Mammary epithelial cell (primary cell): ENCODE measurements at regions of chr16 and their contacts with region 1.

Region 1: GRCh38 chr16:58421529-58421928 is 29.3 kb downstream of the GINS3 start:
- DNase-seq: peak; percentile 88
- H3K4me3 ChIP-seq: no peak overlapping the region
- H3K27ac ChIP-seq: no peak overlapping the region
- H3K4me1 ChIP-seq: peaks cover 12% of the 10 kb centered on the region
- H3K27me3 ChIP-seq: peaks cover 2% of the 10 kb centered on the region
- CTCF ChIP-seq: peak in 1 of 2 donors; percentile 38

Region 2: DNA sequence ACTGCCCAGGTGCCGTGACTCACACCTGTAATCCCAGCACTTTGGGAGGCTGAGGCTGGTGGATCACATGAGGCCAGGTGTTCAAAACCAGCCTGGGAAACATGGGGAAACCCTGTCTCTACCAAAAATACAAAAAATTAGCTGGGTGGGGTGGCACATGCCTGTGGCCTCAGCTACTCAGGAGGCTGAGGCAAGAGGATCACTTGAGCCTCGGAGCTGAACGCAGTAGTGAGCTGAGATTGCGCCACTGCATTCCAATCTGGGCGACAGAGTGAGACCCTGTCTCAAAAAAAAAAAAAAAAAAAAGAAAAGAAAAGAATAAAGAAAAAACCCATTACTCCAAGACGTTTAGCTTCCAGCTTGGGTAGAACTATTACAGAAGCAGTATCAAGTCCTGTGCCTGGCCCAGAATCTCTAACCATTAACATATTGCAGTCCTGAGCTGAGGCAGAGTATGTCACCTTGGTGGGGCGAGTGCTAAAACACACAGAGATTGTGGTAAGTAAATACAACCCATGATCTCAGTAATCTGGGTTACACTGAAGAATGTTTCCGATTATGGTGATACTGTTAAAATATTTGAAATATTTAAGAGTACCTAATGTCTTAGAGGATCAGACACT is 269.2 kb before region 1 on chr16:
- CTCF ChIA-PET with region 1: no interaction called
- dilution Hi-C with region 1: no loop called
- in situ Hi-C with region 1: no loop called
- intact Hi-C with region 1: no loop called
- DNase-seq: no peak
- H3K4me3 ChIP-seq: no peak overlapping the region
- H3K27ac ChIP-seq: no peak overlapping the region
- H3K4me1 ChIP-seq: no peaks in the 10 kb centered on the region
- H3K27me3 ChIP-seq: no peaks in the 10 kb centered on the region
- CTCF ChIP-seq: no peak

Region 3: DNA sequence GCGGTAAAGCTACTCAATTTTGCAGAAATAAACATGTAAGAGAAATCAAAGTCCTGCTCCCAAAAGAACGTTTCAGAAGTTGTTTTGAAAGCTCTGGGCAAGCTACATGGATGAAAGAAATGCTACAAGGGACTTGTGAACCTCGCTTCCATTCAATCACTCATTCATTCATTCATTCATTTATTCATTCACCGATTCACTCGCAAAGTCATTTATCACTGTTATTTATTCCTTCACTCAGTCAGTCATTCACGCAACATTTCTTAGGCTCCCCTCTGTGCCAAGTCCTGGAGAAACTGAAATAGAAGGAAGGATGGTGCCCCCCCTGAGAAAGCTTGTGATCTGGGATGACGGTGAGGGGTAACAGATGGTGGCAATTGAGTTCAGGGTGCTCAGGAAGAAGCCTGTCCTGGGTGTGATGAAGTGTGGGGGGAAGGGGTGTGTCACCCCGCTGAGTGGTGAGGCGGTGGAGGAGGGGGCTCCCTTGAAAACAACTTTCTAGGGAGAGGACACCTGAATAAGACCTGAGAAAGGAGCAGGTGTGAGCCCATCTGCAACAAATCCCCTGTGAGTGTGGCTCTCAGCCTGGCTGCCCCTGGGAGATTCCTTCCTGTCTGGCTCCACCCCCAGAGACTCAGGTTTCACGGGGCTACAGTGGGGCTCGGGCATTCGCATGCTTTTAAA is 90.4 kb before region 1 on chr16:
- CTCF ChIA-PET with region 1: no interaction called
- dilution Hi-C with region 1: loop called (anchors 5 kb)
- in situ Hi-C with region 1: no loop called
- intact Hi-C with region 1: no loop called
- DNase-seq: no peak
- H3K4me3 ChIP-seq: no peak overlapping the region
- H3K27ac ChIP-seq: no peak overlapping the region
- H3K4me1 ChIP-seq: peaks cover 4% of the 10 kb centered on the region
- H3K27me3 ChIP-seq: no peaks in the 10 kb centered on the region
- CTCF ChIP-seq: no peak

Region 4: DNA sequence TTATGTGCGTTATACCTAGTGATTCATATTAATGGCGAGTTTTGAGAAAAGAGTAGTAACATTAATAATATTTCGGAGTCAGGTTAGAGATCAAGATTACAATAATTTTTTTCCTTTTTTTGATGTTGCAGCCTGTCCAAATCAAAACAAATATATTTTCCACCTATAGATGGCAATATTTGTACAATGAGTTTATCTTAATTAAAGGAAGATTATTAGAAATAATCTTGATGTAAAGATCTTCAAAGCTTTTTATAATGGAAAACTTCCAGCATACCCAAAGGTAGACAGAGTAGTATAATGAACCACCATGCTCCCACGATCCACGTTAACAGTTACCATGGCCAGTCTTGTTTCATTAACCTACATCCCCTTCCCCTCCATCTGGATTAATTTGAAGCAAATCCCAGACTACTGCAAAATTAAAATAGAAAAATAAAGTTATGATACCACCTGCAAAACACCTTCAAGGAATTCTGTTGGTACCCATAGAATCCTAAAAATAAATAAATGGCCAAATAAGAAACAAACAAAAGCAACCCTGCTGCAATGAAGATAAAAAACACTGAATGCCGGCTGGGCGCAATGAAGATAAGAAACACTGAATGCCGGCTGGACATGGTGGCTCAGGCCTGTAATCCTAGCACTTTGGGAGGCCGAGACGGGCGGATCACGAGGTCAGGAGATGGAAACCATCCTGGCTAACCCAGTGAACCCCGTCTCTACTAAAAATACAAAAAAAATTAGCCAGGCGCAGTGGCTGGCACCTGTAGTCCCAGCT is 75.8 kb before region 1 on chr16:
- CTCF ChIA-PET with region 1: no interaction called
- dilution Hi-C with region 1: no loop called
- in situ Hi-C with region 1: no loop called
- intact Hi-C with region 1: loop called (anchors 5 kb)
- DNase-seq: no peak
- H3K4me3 ChIP-seq: no peak overlapping the region
- H3K27ac ChIP-seq: no peak overlapping the region
- H3K4me1 ChIP-seq: no peaks in the 10 kb centered on the region
- H3K27me3 ChIP-seq: no peaks in the 10 kb centered on the region
- CTCF ChIP-seq: peak; percentile 26 to 38

Region 5: DNA sequence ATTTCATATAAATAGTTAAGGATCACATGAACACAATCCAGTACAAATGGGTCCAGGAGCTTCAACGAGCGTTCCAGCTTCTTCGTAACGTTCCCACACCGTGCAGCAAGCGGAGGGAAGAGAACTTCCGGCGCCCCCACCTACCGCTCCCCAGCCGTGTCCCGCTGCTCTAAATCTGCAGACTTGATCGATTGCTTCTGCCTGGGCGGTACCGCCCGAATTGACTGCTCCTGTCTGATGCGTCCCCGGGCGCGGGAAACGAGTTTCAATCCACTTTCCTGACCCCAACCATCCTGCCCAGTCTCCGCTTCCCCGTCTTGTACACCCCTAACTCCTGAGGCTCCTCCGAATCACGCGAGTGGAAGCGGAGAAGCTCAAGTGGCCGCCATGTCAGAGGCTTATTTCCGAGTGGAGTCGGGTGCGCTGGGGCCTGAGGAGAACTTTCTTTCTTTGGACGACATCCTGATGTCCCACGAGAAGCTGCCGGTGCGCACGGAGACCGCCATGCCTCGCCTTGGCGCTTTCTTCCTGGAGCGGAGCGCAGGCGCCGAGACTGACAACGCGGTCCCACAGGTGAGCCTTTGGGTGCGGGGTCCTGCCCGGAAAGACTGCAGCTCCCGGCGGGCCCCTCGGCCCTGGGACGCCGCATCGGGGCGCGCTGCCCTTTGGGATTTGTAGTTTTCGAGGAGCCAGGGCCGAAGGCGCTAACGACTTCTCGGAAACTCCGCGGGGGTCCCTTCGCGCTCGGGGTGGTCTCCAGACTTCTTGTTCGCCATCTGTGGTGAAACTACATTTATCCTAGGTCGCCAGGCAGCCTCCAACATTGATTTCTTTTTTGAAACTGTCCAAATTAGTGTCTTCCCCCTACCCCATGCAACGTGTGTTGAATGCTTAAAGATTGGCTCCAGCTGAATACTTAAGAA is 29.1 kb before region 1 on chr16 and contains the start of gene GINS3:
- CTCF ChIA-PET with region 1: no interaction called
- dilution Hi-C with region 1: no loop called
- in situ Hi-C with region 1: no loop called
- intact Hi-C with region 1: loop called (anchors 2 kb)
- DNase-seq: peak; percentile 87
- H3K4me3 ChIP-seq: peak within 1 kb of the TSS; percentile 82 to 87 (median 87)
- H3K27ac ChIP-seq: peak within 1 kb of the TSS; percentile 94
- H3K4me1 ChIP-seq: peaks cover 3% of the 10 kb centered on the region
- H3K27me3 ChIP-seq: no peaks in the 10 kb centered on the region
- CTCF ChIP-seq: peak in 1 of 2 donors; percentile 14
- total RNA-seq, gene GINS3: 3.3 to 15.1 TPM

Region 6: GRCh38 chr16:58487566-58488351 is 66.2 kb after region 1 on chr16:
- CTCF ChIA-PET with region 1: no interaction called
- dilution Hi-C with region 1: no loop called
- in situ Hi-C with region 1: no loop called
- intact Hi-C with region 1: loop called (anchors 2 kb)
- DNase-seq: peak; percentile 51
- H3K4me3 ChIP-seq: peak overlapping the region in 2 of 3 experiments; percentile 33 to 40
- H3K27ac ChIP-seq: no peak overlapping the region
- H3K4me1 ChIP-seq: peaks cover 5% of the 10 kb centered on the region
- H3K27me3 ChIP-seq: no peaks in the 10 kb centered on the region
- CTCF ChIP-seq: peak; percentile 69 to 94